CD8-positive, alpha-beta T cell (primary cell): ENCODE measurements at regions of chr15 and their contacts with region 1.

Region 1: DNA sequence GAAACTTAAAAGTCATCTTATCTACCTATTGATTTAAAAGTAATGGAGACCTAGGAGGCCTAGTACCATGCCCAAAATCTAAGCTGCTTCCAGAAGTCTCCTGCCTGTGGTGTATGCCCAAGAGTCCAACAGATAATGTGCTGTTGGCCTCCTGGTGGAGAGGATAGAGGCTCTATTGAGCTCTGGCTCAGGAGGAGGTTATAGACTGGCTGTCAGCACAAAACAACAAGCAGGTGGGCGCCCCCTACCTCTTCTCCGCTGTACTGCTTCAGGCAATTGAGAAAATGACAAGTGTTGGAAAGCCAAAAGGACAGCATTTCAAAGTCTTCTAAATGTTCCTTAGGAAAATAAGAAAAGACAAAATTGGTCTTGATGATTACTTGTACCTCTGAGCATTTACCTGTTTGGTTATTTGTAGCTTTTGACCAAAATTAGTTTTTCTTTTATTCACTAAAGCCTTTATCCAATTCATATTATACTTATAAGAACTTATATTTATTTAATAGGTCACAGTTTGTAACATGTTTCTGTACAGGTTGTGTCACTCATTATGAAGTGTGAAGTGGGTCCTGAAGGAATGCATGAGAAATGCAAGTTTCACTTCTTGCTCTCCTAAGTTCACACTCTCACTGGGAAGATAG is 17.2 kb upstream of the GNB5 start:
- DNase-seq: peak; percentile 52 to 81 (median 77)
- ATAC-seq: peak; percentile 100
- H3K4me3 ChIP-seq: no peak overlapping the region
- H3K4me3 Mint-ChIP-seq: no peak overlapping the region
- H3K27ac ChIP-seq: no peak overlapping the region
- H3K27ac Mint-ChIP-seq: no peak overlapping the region
- H3K4me1 ChIP-seq: no peaks in the 10 kb centered on the region
- H3K4me1 Mint-ChIP-seq: no peaks in the 10 kb centered on the region
- H3K27me3 ChIP-seq: no peaks in the 10 kb centered on the region
- H3K27me3 Mint-ChIP-seq: no peaks in the 10 kb centered on the region
- CTCF ChIP-seq: peak; percentile 88

Region 2: GRCh38 chr15:51982013-51982769 is 226.2 kb before region 1 on chr15:
- CTCF ChIA-PET with region 1: interaction called, 18 read pairs
- POLR2A ChIA-PET with region 1: no interaction called
- intact Hi-C with region 1: loop called in 1 of 2 experiments (anchors 5 kb)
- DNase-seq: peak in 7 of 9 experiments; percentile 5 to 81 (median 32)
- ATAC-seq: peak; percentile 96
- H3K4me3 ChIP-seq: no peak overlapping the region
- H3K4me3 Mint-ChIP-seq: peak overlapping the region; percentile 68
- H3K27ac ChIP-seq: no peak overlapping the region
- H3K27ac Mint-ChIP-seq: peak overlapping the region; percentile 25
- H3K4me1 ChIP-seq: peaks cover 8% of the 10 kb centered on the region
- H3K4me1 Mint-ChIP-seq: peaks cover 10% of the 10 kb centered on the region
- H3K27me3 ChIP-seq: peaks cover 0 to 2% of the 10 kb centered on the region in 2 experiments
- H3K27me3 Mint-ChIP-seq: no peaks in the 10 kb centered on the region
- CTCF ChIP-seq: peak; percentile 88

Region 3: DNA sequence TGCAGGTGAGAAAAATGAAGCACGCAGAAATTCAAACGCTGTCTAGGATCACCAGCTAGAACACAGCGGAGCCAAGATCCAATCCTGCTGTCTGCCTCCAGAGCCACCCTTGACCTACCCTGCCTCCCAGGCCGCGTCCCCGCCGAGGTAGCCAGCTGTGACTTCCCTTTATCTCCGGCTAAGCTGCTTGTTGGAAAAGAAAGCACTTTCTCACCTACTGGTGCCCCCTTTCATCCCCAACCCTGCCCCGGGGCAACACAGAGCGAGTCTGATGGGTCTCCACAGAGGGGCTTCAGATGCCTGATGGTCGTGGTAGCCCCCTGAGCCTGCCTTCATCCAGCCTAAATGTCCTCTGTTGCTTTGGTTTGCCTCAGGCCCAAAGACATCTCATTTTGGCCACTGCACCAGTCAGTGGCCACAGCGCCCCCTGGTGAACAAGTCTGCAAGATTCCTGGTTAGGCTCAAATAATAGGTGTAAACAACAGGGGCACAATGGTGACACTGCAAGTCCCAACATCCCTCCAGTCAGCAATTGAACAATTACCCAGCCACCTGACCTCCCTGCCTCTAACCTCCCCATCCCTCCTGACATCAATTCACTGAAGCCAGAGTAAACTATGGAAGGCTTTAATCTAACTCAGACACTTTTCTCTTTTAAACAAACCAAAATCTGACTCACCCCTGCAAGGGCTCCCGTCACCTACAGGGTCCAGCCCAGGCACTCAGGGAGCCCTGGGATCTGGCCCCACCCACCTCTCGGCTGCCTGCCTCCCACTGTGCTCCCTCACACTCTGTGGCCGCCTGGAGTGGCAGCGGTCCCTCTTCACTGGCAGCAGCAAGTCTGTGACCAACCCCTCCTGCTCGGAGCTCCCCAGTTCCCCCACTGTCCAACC is 68.6 kb before region 1 on chr15:
- CTCF ChIA-PET with region 1: interaction called, 17 read pairs
- POLR2A ChIA-PET with region 1: no interaction called
- intact Hi-C with region 1: no loop called
- DNase-seq: peak; percentile 25 to 72 (median 63)
- ATAC-seq: peak; percentile 58
- H3K4me3 ChIP-seq: no peak overlapping the region
- H3K4me3 Mint-ChIP-seq: no peak overlapping the region
- H3K27ac ChIP-seq: no peak overlapping the region
- H3K27ac Mint-ChIP-seq: no peak overlapping the region
- H3K4me1 ChIP-seq: peaks cover 22% of the 10 kb centered on the region
- H3K4me1 Mint-ChIP-seq: peaks cover 21% of the 10 kb centered on the region
- H3K27me3 ChIP-seq: no peaks in the 10 kb centered on the region
- H3K27me3 Mint-ChIP-seq: no peaks in the 10 kb centered on the region
- CTCF ChIP-seq: peak; percentile 80

Region 4: GRCh38 chr15:52163321-52164190 is 44.9 kb before region 1 on chr15:
- CTCF ChIA-PET with region 1: interaction called, 25 read pairs
- POLR2A ChIA-PET with region 1: no interaction called
- intact Hi-C with region 1: loop called (anchors 1 kb)
- DNase-seq: peak in 5 of 9 experiments; percentile 31 to 55 (median 40)
- ATAC-seq: peak; percentile 46
- H3K4me3 ChIP-seq: no peak overlapping the region
- H3K4me3 Mint-ChIP-seq: no peak overlapping the region
- H3K27ac ChIP-seq: no peak overlapping the region
- H3K27ac Mint-ChIP-seq: no peak overlapping the region
- H3K4me1 ChIP-seq: peaks cover 4% of the 10 kb centered on the region
- H3K4me1 Mint-ChIP-seq: peaks cover 35% of the 10 kb centered on the region
- H3K27me3 ChIP-seq: no peaks in the 10 kb centered on the region
- H3K27me3 Mint-ChIP-seq: no peaks in the 10 kb centered on the region
- CTCF ChIP-seq: peak; percentile 31

Region 5: DNA sequence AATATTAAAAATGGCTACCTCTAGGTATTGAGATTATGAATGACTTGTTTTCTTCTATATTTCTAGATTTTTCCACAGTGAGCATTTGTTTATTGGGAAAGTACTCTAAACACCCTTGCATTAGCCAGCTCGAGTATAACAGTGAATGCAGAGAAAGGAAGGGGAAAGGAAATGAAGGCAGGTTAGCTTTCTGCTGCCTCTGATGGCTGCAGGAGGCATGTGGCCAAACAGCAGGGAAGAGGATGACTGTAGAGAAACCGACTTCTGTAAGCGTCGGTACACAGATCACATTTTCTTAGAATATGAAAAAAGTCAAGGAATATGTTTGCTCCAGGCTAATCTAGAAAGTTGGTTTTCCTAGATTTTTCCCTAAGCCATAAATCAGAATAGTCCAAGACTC is 37.0 kb before region 1 on chr15:
- CTCF ChIA-PET with region 1: interaction called, 17 read pairs
- POLR2A ChIA-PET with region 1: no interaction called
- intact Hi-C with region 1: no loop called
- DNase-seq: peak in 2 of 9 experiments; percentile 20 to 49
- ATAC-seq: peak; percentile 80
- H3K4me3 ChIP-seq: no peak overlapping the region
- H3K4me3 Mint-ChIP-seq: no peak overlapping the region
- H3K27ac ChIP-seq: no peak overlapping the region
- H3K27ac Mint-ChIP-seq: no peak overlapping the region
- H3K4me1 ChIP-seq: peaks cover 19% of the 10 kb centered on the region
- H3K4me1 Mint-ChIP-seq: peaks cover 61% of the 10 kb centered on the region
- H3K27me3 ChIP-seq: no peaks in the 10 kb centered on the region
- H3K27me3 Mint-ChIP-seq: no peaks in the 10 kb centered on the region
- CTCF ChIP-seq: peak; percentile 13

Region 6: GRCh38 chr15:52186651-52187486 is 21.6 kb before region 1 on chr15:
- CTCF ChIA-PET with region 1: interaction called, 17 read pairs
- POLR2A ChIA-PET with region 1: no interaction called
- intact Hi-C with region 1: loop called in 1 of 2 experiments (anchors 2 kb)
- DNase-seq: no peak
- ATAC-seq: no peak
- H3K4me3 ChIP-seq: no peak overlapping the region
- H3K4me3 Mint-ChIP-seq: no peak overlapping the region
- H3K27ac ChIP-seq: no peak overlapping the region
- H3K27ac Mint-ChIP-seq: no peak overlapping the region
- H3K4me1 ChIP-seq: no peaks in the 10 kb centered on the region
- H3K4me1 Mint-ChIP-seq: peaks cover 4% of the 10 kb centered on the region
- H3K27me3 ChIP-seq: no peaks in the 10 kb centered on the region
- H3K27me3 Mint-ChIP-seq: no peaks in the 10 kb centered on the region
- CTCF ChIP-seq: no peak

Region 7: DNA sequence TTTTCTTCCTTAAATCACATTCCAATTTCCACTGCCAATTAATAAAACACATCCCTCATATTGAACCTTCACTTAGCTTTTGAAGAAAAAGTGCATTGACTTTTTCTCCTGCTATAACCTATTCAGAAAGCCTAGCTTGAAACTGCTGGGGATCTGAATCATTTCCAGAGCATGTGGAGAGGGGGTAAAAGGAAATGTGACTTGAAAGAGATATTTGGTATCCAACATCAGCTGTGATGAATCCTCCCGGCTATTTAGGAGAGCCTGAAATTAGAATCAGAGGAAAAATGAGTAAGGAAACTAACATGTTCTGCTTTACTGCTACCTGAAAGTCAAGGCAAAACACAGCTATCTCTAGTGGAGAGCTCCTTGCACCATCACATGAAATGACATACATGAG is 14.6 kb before region 1 on chr15:
- CTCF ChIA-PET with region 1: interaction called, 22 read pairs
- POLR2A ChIA-PET with region 1: interaction called, 3 read pairs
- intact Hi-C with region 1: no loop called
- DNase-seq: no peak
- ATAC-seq: no peak
- H3K4me3 ChIP-seq: no peak overlapping the region
- H3K4me3 Mint-ChIP-seq: no peak overlapping the region
- H3K27ac ChIP-seq: no peak overlapping the region
- H3K27ac Mint-ChIP-seq: no peak overlapping the region
- H3K4me1 ChIP-seq: no peaks in the 10 kb centered on the region
- H3K4me1 Mint-ChIP-seq: no peaks in the 10 kb centered on the region
- H3K27me3 ChIP-seq: no peaks in the 10 kb centered on the region
- H3K27me3 Mint-ChIP-seq: no peaks in the 10 kb centered on the region
- CTCF ChIP-seq: no peak